Astrocyte of the cerebellum (primary cell): ENCODE measurements at regions of chr4 and their contacts with region 1.

Region 1: DNA sequence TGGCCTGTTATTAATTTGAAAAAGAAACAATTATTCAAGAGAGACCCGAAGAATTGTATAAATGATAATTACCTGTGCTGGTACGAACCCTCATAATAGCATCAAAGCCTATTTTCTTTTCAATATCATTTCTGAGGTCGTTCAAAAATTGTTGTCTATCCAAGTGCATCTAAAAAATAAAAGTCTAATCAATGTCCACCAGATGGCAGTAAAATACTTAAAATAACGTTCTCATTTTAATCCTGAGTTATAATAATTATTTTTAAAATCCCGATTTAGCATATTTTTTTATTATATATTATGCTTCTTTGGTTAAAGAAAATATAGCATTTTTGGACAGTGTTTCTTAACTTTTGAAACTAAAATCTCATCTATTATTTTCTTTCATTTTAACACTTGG is 55.7 kb downstream of the METTL14 start:
- DNase-seq: no peak
- H3K4me3 ChIP-seq: no peak overlapping the region
- CTCF ChIP-seq: no peak

Region 2: GRCh38 chr4:118968005-118968404 is 227.1 kb after region 1 on chr4:
- in situ Hi-C with region 1: loop called (anchors 25 kb)
- DNase-seq: peak; percentile 94
- H3K4me3 ChIP-seq: no peak overlapping the region
- CTCF ChIP-seq: no peak